ENCODE measurements at regions of chr12 and their contacts with region 1.

Region 1: GRCh38 chr12:810671-811415 is 58.5 kb downstream of the WNK1 start:
- DNase-seq: no peak
- H3K4me3 Mint-ChIP-seq: no peak overlapping the region
- H3K27ac Mint-ChIP-seq: no peak overlapping the region
- H3K4me1 Mint-ChIP-seq: peaks cover 27% of the 10 kb centered on the region
- H3K27me3 Mint-ChIP-seq: no peaks in the 10 kb centered on the region
- CTCF ChIP-seq: no peak

Region 2: GRCh38 chr12:779745-780734 is 30.8 kb before region 1 on chr12:
- CTCF ChIA-PET with region 1: interaction called, 13 read pairs
- POLR2A ChIA-PET with region 1: interaction called, 4 read pairs
- intact Hi-C with region 1: no loop called
- DNase-seq: peak; percentile 56
- H3K4me3 Mint-ChIP-seq: peak overlapping the region; percentile 62
- H3K27ac Mint-ChIP-seq: peak overlapping the region; percentile 63
- H3K4me1 Mint-ChIP-seq: peaks cover 19% of the 10 kb centered on the region
- H3K27me3 Mint-ChIP-seq: no peaks in the 10 kb centered on the region
- CTCF ChIP-seq: no peak

Region 3: DNA sequence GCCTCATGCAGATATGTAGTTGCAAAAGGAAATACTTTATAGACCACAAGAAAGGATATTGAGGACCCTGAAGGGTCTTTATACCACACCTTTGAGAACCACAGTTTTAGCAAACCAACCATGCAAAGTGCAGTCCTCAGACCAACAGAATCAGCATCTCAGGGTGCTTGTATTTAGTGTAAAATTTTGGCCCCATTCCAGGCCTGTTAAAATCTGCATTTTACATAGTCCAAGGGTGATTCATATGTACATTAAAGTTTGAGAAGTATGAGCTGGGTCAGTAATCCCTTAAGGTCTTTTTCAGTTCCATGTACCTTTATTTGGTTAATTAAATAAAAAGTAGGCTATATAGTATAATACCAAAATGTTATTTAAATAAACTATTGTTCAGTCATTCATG is 32.8 kb after region 1 on chr12:
- CTCF ChIA-PET with region 1: interaction called, 13 read pairs
- POLR2A ChIA-PET with region 1: interaction called, 4 read pairs
- intact Hi-C with region 1: no loop called
- DNase-seq: peak; percentile 68
- H3K4me3 Mint-ChIP-seq: no peak overlapping the region
- H3K27ac Mint-ChIP-seq: no peak overlapping the region
- H3K4me1 Mint-ChIP-seq: peaks cover 24% of the 10 kb centered on the region
- H3K27me3 Mint-ChIP-seq: no peaks in the 10 kb centered on the region
- CTCF ChIP-seq: no peak

Region 4: GRCh38 chr12:857611-858010 is 46.8 kb after region 1 on chr12:
- CTCF ChIA-PET with region 1: interaction called, 45 read pairs
- POLR2A ChIA-PET with region 1: interaction called, 43 read pairs
- intact Hi-C with region 1: loop called (anchors 1 kb)
- DNase-seq: peak; percentile 88
- H3K4me3 Mint-ChIP-seq: peak overlapping the region; percentile 47
- H3K27ac Mint-ChIP-seq: peak overlapping the region; percentile 92
- H3K4me1 Mint-ChIP-seq: peaks cover 24% of the 10 kb centered on the region
- H3K27me3 Mint-ChIP-seq: no peaks in the 10 kb centered on the region
- CTCF ChIP-seq: no peak

Region 5: DNA sequence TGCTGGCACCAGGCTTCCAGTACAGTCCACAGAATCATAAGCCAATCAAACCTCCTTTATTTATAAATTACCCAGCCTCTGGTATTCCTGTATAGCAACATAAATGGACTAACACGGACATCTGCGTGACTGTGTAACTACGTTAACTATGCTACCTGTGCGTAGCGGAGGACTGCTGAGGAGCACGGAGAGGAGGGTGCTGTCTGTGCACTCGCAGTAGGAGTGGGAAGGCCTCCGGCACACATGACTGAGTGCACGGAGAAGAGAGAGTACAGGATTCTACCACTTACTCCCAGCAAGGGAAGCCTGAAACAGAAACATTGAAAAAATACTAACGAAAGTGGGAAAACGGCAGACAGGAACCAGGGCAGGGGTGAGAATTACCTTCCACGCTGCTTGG is 115.8 kb after region 1 on chr12:
- CTCF ChIA-PET with region 1: no interaction called
- POLR2A ChIA-PET with region 1: no interaction called
- intact Hi-C with region 1: no loop called
- DNase-seq: no peak
- H3K4me3 Mint-ChIP-seq: no peak overlapping the region
- H3K27ac Mint-ChIP-seq: no peak overlapping the region
- H3K4me1 Mint-ChIP-seq: no peaks in the 10 kb centered on the region
- H3K27me3 Mint-ChIP-seq: no peaks in the 10 kb centered on the region
- CTCF ChIP-seq: no peak

Region 6: GRCh38 chr12:1583421-1584078 is 772.7 kb after region 1 on chr12:
- CTCF ChIA-PET with region 1: no interaction called
- POLR2A ChIA-PET with region 1: no interaction called
- intact Hi-C with region 1: loop called (anchors 1 kb)
- DNase-seq: peak; percentile 84
- H3K4me3 Mint-ChIP-seq: no peak overlapping the region
- H3K27ac Mint-ChIP-seq: no peak overlapping the region
- H3K4me1 Mint-ChIP-seq: peaks cover 16% of the 10 kb centered on the region
- H3K27me3 Mint-ChIP-seq: no peaks in the 10 kb centered on the region
- CTCF ChIP-seq: peak; percentile 82